GM23248 (cell line): ENCODE measurements at regions of chrX and their contacts with region 1.

Region 1: GRCh38 chrX:10189317-10190268 is 32.8 kb downstream of the CLCN4 start:
- DNase-seq: peak; percentile 58
- H3K4me3 ChIP-seq: no peak overlapping the region
- H3K27ac ChIP-seq: no peak overlapping the region
- H3K4me1 ChIP-seq: no peaks in the 10 kb centered on the region; the same call in 1 of the 2 replicates
- H3K27me3 ChIP-seq: no peaks in the 10 kb centered on the region

Region 2: DNA sequence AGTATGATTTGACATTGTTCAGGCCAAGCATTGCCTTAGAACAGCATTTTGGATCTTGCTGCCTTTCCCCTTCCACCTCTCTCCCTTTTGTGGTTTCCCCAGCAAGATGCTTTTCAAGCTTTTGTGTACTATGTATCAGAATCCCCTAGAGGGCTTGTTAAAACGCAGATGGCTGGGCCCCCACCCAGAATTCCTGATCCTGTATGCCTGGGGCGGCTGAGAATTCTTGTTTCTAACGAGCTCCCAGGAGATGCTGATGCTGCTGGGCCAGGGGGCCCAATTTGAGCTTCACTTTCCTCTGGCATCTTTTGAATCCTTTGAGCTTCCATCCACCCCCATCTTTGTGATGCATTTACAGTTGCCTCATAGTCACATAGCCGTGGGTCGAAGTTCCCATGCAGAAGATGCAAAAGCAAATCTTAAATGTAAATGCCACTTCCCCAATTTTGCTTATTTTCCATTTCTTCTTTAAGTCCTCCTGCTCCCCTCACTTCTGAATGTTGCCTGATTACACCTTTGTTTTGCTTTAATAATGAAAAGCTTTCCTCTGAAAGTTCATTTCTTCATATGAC is 940.0 kb after region 1 on chrX:
- in situ Hi-C with region 1: loop called (anchors 10 kb)
- DNase-seq: no peak
- H3K4me3 ChIP-seq: no peak overlapping the region
- H3K27ac ChIP-seq: no peak overlapping the region
- H3K4me1 ChIP-seq: no peaks in the 10 kb centered on the region
- H3K27me3 ChIP-seq: no peaks in the 10 kb centered on the region